CD8-positive, alpha-beta memory T cell (primary cell): ENCODE measurements at regions of chr15 and their contacts with region 1.

Region 1: GRCh38 chr15:51731549-51732267 is 5.7 kb downstream of the LYSMD2 start:
- DNase-seq: peak in 4 of 5 donors; percentile 15 to 65 (median 55)
- H3K4me3 ChIP-seq: peak overlapping the region; percentile 59
- H3K4me3 Mint-ChIP-seq: peak overlapping the region; percentile 79 to 92 (median 86)
- H3K27ac ChIP-seq: peak overlapping the region; percentile 65
- H3K27ac Mint-ChIP-seq: peak overlapping the region; percentile 90 to 99 (median 97)
- H3K4me1 ChIP-seq: peaks cover 85% of the 10 kb centered on the region
- H3K4me1 Mint-ChIP-seq: peaks cover 83 to 97% (median 95%) of the 10 kb centered on the region in 3 donors
- H3K27me3 ChIP-seq: no peaks in the 10 kb centered on the region
- H3K27me3 Mint-ChIP-seq: no peaks in the 10 kb centered on the region

Region 2: DNA sequence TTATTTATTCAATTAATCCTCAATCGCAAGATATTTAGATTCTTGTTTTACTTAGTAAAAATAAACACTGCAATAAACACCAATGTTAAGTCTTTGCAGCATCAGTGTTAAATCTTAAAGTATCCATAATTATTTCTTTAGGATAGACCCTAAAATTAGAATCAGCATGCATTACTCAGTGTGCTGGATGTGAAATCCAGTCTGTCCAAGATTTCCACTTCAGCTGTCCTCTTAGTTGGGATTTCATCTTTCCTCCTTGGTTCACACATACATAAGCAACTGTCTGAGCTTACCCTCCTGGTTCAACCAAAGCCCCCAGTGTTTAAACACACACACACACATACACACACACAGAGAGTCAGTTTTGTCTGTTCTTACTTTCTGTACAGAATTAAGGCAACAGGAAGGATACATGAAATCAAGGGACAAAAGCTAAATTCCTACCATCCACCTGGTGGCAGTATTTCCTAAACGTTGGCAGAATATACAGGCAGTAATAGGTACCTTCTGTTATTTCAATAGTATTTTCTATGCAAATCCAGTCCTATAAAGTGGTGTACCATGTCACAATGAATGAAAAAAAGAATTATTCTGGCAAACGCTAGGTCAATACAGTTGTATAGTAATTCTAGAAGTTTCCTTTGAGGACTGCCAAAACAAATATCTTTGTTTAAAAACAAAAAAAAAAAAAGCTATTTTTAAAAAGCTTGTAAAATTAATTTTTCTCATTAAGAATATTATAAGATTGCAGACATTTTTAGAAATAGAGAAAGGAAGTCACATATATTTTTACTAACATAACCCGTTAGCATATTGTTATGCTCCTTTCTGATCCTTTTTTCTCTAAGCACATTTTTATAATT is 81.8 kb before region 1 on chr15:
- CTCF ChIA-PET with region 1: interaction called, 23 read pairs
- POLR2A ChIA-PET with region 1: no interaction called
- DNase-seq: peak in 4 of 5 donors; percentile 6 to 65 (median 44)
- H3K4me3 ChIP-seq: no peak overlapping the region
- H3K4me3 Mint-ChIP-seq: no peak overlapping the region
- H3K27ac ChIP-seq: no peak overlapping the region
- H3K27ac Mint-ChIP-seq: no peak overlapping the region
- H3K4me1 ChIP-seq: no peaks in the 10 kb centered on the region
- H3K4me1 Mint-ChIP-seq: no peaks in the 10 kb centered on the region
- H3K27me3 ChIP-seq: no peaks in the 10 kb centered on the region
- H3K27me3 Mint-ChIP-seq: peaks cover 0 to 5% of the 10 kb centered on the region in 2 donors